Common myeloid progenitor, CD34-positive (primary cell): ENCODE measurements at regions of chr4 and their contacts with region 1.

Region 1: DNA sequence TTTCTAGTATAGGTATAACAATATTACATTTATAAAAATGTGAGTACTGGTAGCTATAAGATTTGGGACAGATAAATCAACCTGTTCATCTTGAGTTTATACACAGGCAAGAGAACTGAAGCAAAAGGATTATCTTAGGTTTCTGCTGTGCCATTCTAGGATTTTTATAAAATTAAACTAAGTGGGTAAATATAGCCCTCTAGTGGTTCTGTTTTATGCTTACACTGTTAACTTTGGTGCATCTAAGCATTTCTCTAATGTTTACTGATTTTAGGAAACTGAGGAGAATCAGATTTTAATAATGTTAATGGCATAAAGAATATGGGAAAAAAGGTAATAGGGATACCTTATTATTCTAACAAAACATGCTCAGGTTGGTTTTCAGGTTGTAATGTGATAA is 1.1 kb upstream of the RRH start:
- DNase-seq: peak; percentile 31 to 56 (median 54)
- H3K4me3 ChIP-seq: no peak overlapping the region
- H3K27ac ChIP-seq: no peak overlapping the region
- H3K4me1 ChIP-seq: no peaks in the 10 kb centered on the region
- H3K27me3 ChIP-seq: no peaks in the 10 kb centered on the region

Region 2: GRCh38 chr4:109424093-109424841 is 402.5 kb before region 1 on chr4:
- CTCF ChIA-PET with region 1: interaction called, 29 read pairs
- POLR2A ChIA-PET with region 1: interaction called, 3 read pairs
- DNase-seq: no peak
- H3K4me3 ChIP-seq: no peak overlapping the region
- H3K27ac ChIP-seq: no peak overlapping the region
- H3K4me1 ChIP-seq: peaks cover 0 to 2% (median 0%) of the 10 kb centered on the region in 4 experiments
- H3K27me3 ChIP-seq: no peaks in the 10 kb centered on the region

Region 3: DNA sequence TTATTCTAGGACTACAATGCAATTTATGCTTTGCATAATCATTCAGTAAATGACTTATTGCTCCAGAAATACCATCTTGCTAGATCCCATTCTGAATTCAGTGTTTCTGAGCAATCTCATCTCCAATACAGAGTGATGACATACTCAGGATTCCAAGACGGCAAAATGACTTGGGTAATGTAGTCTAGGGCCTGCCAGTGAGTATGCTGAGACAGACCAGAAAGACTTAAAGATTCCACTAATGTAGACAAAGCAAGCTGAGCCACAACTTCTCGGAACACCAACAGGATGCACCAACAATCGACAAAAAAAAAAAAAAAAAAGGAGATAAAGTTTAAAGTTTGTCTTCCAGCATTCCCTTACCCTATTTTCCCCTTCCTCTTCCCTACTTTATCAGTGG is 394.0 kb before region 1 on chr4:
- CTCF ChIA-PET with region 1: interaction called, 29 read pairs
- POLR2A ChIA-PET with region 1: no interaction called
- DNase-seq: peak; percentile 9 to 51 (median 42)
- H3K4me3 ChIP-seq: peak overlapping the region in 6 of 7 experiments; percentile 80 to 93 (median 84)
- H3K27ac ChIP-seq: peak overlapping the region; percentile 86 to 93
- H3K4me1 ChIP-seq: peaks cover 21 to 36% (median 29%) of the 10 kb centered on the region in 4 experiments
- H3K27me3 ChIP-seq: no peaks in the 10 kb centered on the region

Region 4: GRCh38 chr4:109702950-109703663 is 123.6 kb before region 1 on chr4 and contains the start of gene CASP6:
- CTCF ChIA-PET with region 1: interaction called, 33 read pairs
- POLR2A ChIA-PET with region 1: no interaction called
- DNase-seq: peak; percentile 87 to 94 (median 92)
- H3K4me3 ChIP-seq: peak within 1 kb of the TSS; percentile 78 to 97 (median 88)
- H3K27ac ChIP-seq: peak within 1 kb of the TSS; percentile 74 to 92
- H3K4me1 ChIP-seq: peaks cover 6 to 45% (median 32%) of the 10 kb centered on the region in 4 experiments
- H3K27me3 ChIP-seq: no peaks in the 10 kb centered on the region

Region 5: GRCh38 chr4:109815151-109816081 is 11.3 kb before region 1 on chr4 and contains the start of gene GAR1:
- CTCF ChIA-PET with region 1: interaction called, 13 read pairs
- POLR2A ChIA-PET with region 1: no interaction called
- DNase-seq: peak; percentile 96 to 98 (median 97)
- H3K4me3 ChIP-seq: peak within 1 kb of the TSS; percentile 63 to 97 (median 91)
- H3K27ac ChIP-seq: peak within 1 kb of the TSS; percentile 97 to 99
- H3K4me1 ChIP-seq: peaks cover 9 to 30% (median 14%) of the 10 kb centered on the region in 4 experiments
- H3K27me3 ChIP-seq: no peaks in the 10 kb centered on the region

Region 6: DNA sequence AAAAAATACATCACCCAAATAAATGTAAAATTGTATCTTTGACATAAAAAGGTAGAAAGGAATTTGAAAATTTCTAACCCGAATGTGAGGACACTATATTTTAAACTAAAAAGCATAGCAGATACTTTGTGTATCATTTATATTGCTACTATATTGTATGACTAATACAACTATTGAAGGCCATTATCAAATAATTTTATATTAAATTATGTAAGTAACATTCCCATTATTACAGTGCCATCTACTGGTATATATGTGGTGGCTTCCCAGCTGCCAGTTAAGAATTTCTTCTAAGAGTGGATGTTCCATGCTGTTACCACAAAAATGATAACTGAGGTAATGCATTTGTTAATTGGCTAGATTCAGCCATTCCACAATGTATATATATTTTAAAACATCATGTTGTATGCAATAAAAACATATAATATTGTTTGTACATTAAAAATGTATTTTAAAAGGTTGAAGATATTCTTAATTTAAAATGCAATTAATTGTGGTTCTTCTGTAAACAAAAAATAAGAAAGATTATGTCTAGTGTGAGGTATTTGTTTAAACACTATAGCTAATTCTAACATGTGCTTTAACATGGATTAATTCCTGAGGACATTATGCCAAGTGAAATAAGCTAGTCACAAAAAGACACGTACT is 151.3 kb after region 1 on chr4:
- CTCF ChIA-PET with region 1: interaction called, 14 read pairs
- POLR2A ChIA-PET with region 1: no interaction called
- DNase-seq: peak; percentile 40 to 63 (median 57)
- H3K4me3 ChIP-seq: no peak overlapping the region
- H3K27ac ChIP-seq: no peak overlapping the region
- H3K4me1 ChIP-seq: peaks cover 0 to 17% (median 6%) of the 10 kb centered on the region in 4 experiments
- H3K27me3 ChIP-seq: no peaks in the 10 kb centered on the region

Region 7: GRCh38 chr4:109990261-109991257 is 163.8 kb after region 1 on chr4:
- CTCF ChIA-PET with region 1: no interaction called
- POLR2A ChIA-PET with region 1: no interaction called
- DNase-seq: peak in 2 of 3 donors; percentile 26 to 43
- H3K4me3 ChIP-seq: no peak overlapping the region
- H3K27ac ChIP-seq: no peak overlapping the region
- H3K4me1 ChIP-seq: peaks cover 0 to 12% (median 3%) of the 10 kb centered on the region in 4 experiments
- H3K27me3 ChIP-seq: no peaks in the 10 kb centered on the region